CD4-positive, alpha-beta T cell (primary cell): ENCODE measurements at regions of chr9 and their contacts with region 1.

Region 1: DNA sequence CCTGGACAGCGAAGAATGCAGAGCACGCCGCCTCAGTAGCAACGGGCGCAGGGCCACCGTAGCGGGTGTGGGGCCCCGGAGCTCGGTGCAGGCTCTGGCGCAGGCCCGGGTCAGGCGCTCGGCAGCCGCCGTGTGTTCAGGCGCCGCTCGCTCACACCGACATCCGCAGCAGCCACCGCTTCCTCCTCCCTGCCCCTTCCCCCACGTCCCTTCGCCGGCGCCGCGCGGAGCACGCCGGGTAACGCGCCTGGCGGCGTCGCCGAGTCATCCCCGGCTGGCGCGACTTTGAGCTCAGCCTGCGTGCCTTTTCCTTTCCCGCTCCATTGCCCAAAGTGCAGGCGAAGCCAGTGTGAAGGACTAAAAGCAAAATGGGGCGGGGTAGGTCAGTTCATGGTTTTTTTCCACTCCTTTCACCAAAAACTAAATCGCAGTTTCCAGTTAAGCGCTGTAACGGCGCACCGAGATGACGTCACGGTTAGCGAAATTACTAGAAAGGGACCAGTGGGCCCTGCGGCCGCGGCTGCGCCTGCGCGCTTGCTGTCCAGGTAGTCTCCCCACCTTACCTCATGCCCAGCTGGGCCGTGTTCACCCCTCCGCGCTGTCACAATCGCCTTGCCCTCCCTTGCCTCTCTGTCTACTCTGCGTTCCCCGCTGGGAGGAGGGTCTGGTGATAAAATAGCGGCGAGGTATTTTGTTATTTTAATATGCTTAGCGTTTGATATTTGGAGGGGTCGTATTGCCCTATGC is at the start of gene UBQLN1:
- DNase-seq: peak; percentile 85 to 97 (median 89)
- ATAC-seq: peak; percentile 86
- H3K4me3 ChIP-seq: peak within 1 kb of the TSS; percentile 92
- H3K4me3 Mint-ChIP-seq: peak within 1 kb of the TSS; percentile 90
- H3K27ac ChIP-seq: peak within 1 kb of the TSS; percentile 96 to 98
- H3K27ac Mint-ChIP-seq: peak within 1 kb of the TSS; percentile 94
- H3K4me1 ChIP-seq: peaks cover 14% of the 10 kb centered on the region
- H3K4me1 Mint-ChIP-seq: peaks cover 53% of the 10 kb centered on the region
- H3K27me3 ChIP-seq: no peaks in the 10 kb centered on the region
- H3K27me3 Mint-ChIP-seq: no peaks in the 10 kb centered on the region
- CTCF ChIP-seq: no peak
- total RNA-seq, gene UBQLN1: 178 to 185 TPM

Region 2: GRCh38 chr9:83622939-83623678 is 84.8 kb before region 1 on chr9 and contains the start of gene IDNK:
- CTCF ChIA-PET with region 1: interaction called, 7 read pairs
- POLR2A ChIA-PET with region 1: interaction called, 48 read pairs
- intact Hi-C with region 1: loop called (anchors 1 kb)
- DNase-seq: peak; percentile 37 to 84 (median 52)
- ATAC-seq: peak; percentile 88
- H3K4me3 ChIP-seq: peak within 1 kb of the TSS; percentile 73
- H3K4me3 Mint-ChIP-seq: peak within 1 kb of the TSS; percentile 99
- H3K27ac ChIP-seq: peak within 1 kb of the TSS; percentile 78 to 86
- H3K27ac Mint-ChIP-seq: peak within 1 kb of the TSS; percentile 97
- H3K4me1 ChIP-seq: peaks cover 26% of the 10 kb centered on the region
- H3K4me1 Mint-ChIP-seq: peaks cover 28% of the 10 kb centered on the region
- H3K27me3 ChIP-seq: no peaks in the 10 kb centered on the region
- H3K27me3 Mint-ChIP-seq: no peaks in the 10 kb centered on the region
- CTCF ChIP-seq: no peak
- total RNA-seq, gene IDNK: 5.4 to 5.6 TPM

Region 3: GRCh38 chr9:83665580-83666200 is 42.3 kb before region 1 on chr9:
- CTCF ChIA-PET with region 1: interaction called, 3 read pairs
- POLR2A ChIA-PET with region 1: interaction called, 10 read pairs
- intact Hi-C with region 1: loop called (anchors 2 to 5 kb)
- DNase-seq: no peak
- ATAC-seq: no peak
- H3K4me3 ChIP-seq: no peak overlapping the region
- H3K4me3 Mint-ChIP-seq: no peak overlapping the region
- H3K27ac ChIP-seq: no peak overlapping the region
- H3K27ac Mint-ChIP-seq: peak overlapping the region; percentile 43
- H3K4me1 ChIP-seq: no peaks in the 10 kb centered on the region
- H3K4me1 Mint-ChIP-seq: peaks cover 39% of the 10 kb centered on the region
- H3K27me3 ChIP-seq: no peaks in the 10 kb centered on the region
- H3K27me3 Mint-ChIP-seq: no peaks in the 10 kb centered on the region
- CTCF ChIP-seq: no peak

Region 4: GRCh38 chr9:83677596-83677995 is 30.3 kb before region 1 on chr9:
- CTCF ChIA-PET with region 1: interaction called, 5 read pairs
- POLR2A ChIA-PET with region 1: interaction called, 28 read pairs
- intact Hi-C with region 1: no loop called
- DNase-seq: no peak
- ATAC-seq: no peak
- H3K4me3 ChIP-seq: no peak overlapping the region
- H3K4me3 Mint-ChIP-seq: no peak overlapping the region
- H3K27ac ChIP-seq: no peak overlapping the region
- H3K27ac Mint-ChIP-seq: no peak overlapping the region
- H3K4me1 ChIP-seq: no peaks in the 10 kb centered on the region
- H3K4me1 Mint-ChIP-seq: peaks cover 29% of the 10 kb centered on the region
- H3K27me3 ChIP-seq: no peaks in the 10 kb centered on the region
- H3K27me3 Mint-ChIP-seq: no peaks in the 10 kb centered on the region
- CTCF ChIP-seq: no peak

Region 5: GRCh38 chr9:83691492-83691891 is 16.4 kb before region 1 on chr9:
- CTCF ChIA-PET with region 1: interaction called, 3 read pairs
- POLR2A ChIA-PET with region 1: interaction called, 18 read pairs
- intact Hi-C with region 1: loop called in 1 of 2 experiments (anchors 1 kb)
- DNase-seq: no peak
- ATAC-seq: no peak
- H3K4me3 ChIP-seq: no peak overlapping the region
- H3K4me3 Mint-ChIP-seq: peak overlapping the region; percentile 27
- H3K27ac ChIP-seq: no peak overlapping the region
- H3K27ac Mint-ChIP-seq: peak overlapping the region; percentile 16
- H3K4me1 ChIP-seq: peaks cover 28% of the 10 kb centered on the region
- H3K4me1 Mint-ChIP-seq: peaks cover 92% of the 10 kb centered on the region
- H3K27me3 ChIP-seq: no peaks in the 10 kb centered on the region
- H3K27me3 Mint-ChIP-seq: no peaks in the 10 kb centered on the region
- CTCF ChIP-seq: no peak

Region 6: GRCh38 chr9:83920927-83921707 is 213.2 kb after region 1 on chr9 and contains the start of gene KIF27:
- CTCF ChIA-PET with region 1: interaction called, 7 read pairs
- POLR2A ChIA-PET with region 1: interaction called, 34 read pairs
- intact Hi-C with region 1: loop called (anchors 1 to 2 kb)
- DNase-seq: peak; percentile 91 to 97 (median 95)
- ATAC-seq: peak; percentile 83
- H3K4me3 ChIP-seq: peak within 1 kb of the TSS; percentile 69
- H3K4me3 Mint-ChIP-seq: peak within 1 kb of the TSS; percentile 98
- H3K27ac ChIP-seq: peak within 1 kb of the TSS; percentile 85 to 91
- H3K27ac Mint-ChIP-seq: peak within 1 kb of the TSS; percentile 91
- H3K4me1 ChIP-seq: peaks cover 14% of the 10 kb centered on the region
- H3K4me1 Mint-ChIP-seq: peaks cover 17% of the 10 kb centered on the region
- H3K27me3 ChIP-seq: no peaks in the 10 kb centered on the region
- H3K27me3 Mint-ChIP-seq: no peaks in the 10 kb centered on the region
- CTCF ChIP-seq: peak; percentile 79
- total RNA-seq, gene KIF27: 3.6 to 5.1 TPM

Region 7: GRCh38 chr9:84436386-84437109 is 728.6 kb after region 1 on chr9:
- CTCF ChIA-PET with region 1: no interaction called
- POLR2A ChIA-PET with region 1: no interaction called
- intact Hi-C with region 1: no loop called
- DNase-seq: no peak
- ATAC-seq: no peak
- H3K4me3 ChIP-seq: no peak overlapping the region
- H3K4me3 Mint-ChIP-seq: no peak overlapping the region
- H3K27ac ChIP-seq: no peak overlapping the region
- H3K27ac Mint-ChIP-seq: no peak overlapping the region
- H3K4me1 ChIP-seq: no peaks in the 10 kb centered on the region
- H3K4me1 Mint-ChIP-seq: no peaks in the 10 kb centered on the region
- H3K27me3 ChIP-seq: no peaks in the 10 kb centered on the region
- H3K27me3 Mint-ChIP-seq: no peaks in the 10 kb centered on the region
- CTCF ChIP-seq: no peak